ENCODE measurements at regions of chr2 and their contacts with region 1.

Region 1: GRCh38 chr2:168246483-168247340 is 683 bp downstream of the STK39 start:
- ATAC-seq: peak; percentile 53 to 70 (median 65)
- H3K4me3 ChIP-seq: peak overlapping the region; percentile 63 to 90 (median 74)
- H3K27ac ChIP-seq: peak overlapping the region; percentile 70 to 83
- H3K4me1 ChIP-seq: peaks cover 18 to 24% of the 10 kb centered on the region in 2 donors

Region 2: DNA sequence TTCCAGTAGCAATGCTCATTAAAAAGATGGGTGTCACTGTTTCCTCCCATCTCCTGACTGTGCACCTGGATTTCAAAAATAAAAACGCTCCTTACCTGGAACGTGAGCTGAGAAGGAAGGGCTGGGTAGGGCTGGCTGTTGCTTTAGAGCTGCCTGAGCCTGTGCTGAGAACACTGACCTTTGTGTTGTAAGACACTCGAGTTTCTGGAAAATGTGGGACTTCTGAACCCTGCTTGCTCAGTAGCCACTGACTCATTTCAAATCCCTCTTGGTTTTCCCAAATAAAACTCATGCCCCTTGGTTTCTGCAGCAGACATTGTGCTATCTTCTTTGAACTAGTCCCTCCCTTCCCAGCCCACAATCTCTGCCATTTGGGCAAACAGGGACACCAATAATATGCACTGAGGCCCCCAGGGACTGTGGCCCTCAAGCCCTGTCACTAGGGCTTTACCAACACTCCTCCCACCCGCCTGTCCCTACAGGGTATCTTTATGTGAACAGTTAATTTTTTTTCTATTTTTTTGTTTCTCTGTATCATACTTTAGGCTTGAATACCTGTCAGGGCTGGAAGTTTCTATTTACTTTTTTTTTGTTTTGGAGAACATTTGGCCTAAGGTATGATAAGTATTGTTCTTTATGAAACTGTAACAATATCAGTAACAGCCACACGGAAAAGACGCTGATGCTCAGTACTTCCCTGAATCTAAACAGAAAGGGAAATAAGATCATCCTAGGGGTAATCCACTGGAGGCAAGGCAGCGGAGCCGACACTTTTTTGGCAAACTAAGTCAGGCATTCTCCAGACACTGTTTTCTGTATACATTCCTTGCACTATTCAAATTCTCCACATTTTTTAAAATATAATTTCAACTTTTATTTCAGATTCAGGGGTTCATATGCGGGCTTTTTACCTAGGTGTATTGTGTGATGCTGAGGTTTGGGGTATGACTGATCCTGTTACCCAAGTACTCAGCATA is 279.5 kb before region 1 on chr2:
- in situ Hi-C with region 1: no loop called
- ATAC-seq: no peak
- H3K4me3 ChIP-seq: no peak overlapping the region
- H3K27ac ChIP-seq: no peak overlapping the region
- H3K4me1 ChIP-seq: peaks cover 9 to 26% of the 10 kb centered on the region in 2 donors

Region 3: DNA sequence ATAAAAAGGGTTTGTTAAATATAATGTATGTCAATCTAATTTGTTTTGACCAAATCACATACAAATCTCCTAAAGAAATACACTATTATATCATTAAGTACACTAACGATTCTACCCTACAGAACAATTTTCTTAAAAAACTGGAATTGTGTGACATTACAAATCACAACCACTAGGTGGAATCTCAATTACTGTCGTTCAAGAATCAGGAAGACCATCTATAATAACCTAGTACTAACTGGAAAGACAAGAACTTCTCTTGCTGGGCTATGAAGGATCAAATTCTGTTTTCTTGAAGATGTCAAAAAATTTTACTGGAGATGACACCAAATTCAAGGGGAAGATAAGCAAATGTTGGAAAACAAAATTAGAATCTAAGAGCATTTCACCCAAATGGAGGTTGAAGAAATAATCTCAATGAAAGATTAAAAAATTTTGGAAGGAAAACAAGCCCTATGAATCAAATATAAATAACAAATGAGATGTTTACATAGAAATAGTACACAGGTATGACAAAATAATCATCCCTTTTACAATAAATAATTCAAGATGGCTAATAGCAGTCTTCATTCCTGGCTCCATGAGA is 110.2 kb before region 1 on chr2:
- in situ Hi-C with region 1: loop called in 1 of 9 experiments (anchors 25 kb)
- ATAC-seq: peak in 1 of 8 experiments; percentile 39
- H3K4me3 ChIP-seq: no peak overlapping the region
- H3K27ac ChIP-seq: no peak overlapping the region
- H3K4me1 ChIP-seq: peaks cover 27 to 30% of the 10 kb centered on the region in 2 donors